ENCODE measurements at regions of chr11 and their contacts with region 1.

Region 1: DNA sequence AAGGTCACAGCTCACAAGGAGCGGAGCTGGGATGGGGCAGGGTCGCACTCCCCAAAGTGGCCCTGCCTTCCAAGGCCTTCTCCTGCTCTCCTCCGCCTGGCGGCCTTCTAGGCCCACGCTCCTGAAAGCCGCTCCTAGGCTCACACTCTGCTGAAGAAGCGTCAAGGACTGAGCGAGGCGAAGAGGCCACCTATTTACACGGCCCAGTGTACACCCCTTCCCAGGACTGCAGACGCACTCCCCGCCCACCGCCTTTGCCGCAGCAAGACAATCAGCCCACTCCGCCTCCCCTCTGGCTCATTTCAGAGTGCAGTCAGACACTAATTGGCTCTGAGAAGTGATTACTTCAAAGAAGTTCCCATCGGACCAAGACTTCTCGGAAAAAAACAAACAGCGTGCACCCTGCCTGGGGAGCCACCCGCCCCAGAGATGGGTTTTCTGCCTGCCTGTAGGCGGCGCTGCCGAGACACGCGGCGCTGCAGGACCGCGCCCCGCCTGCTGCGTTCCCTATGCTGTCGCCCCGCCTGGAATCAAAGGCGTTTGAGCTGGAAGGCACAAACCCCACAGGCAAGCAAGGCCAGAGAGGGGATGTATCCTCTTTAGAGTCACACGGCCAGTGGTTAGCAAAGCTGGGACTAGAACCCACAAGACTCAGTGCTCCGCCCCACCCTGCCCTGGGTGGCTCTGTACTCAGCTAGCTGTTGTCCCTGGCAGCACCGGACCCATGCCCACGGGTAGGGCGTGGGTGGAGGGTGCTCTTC is 414.8 kb downstream of the BUD13 start:
- DNase-seq: peak; percentile 43
- H3K4me3 ChIP-seq: no peak overlapping the region
- H3K27ac ChIP-seq: peak overlapping the region; percentile 39
- H3K4me1 ChIP-seq: peaks cover 25% of the 10 kb centered on the region
- H3K27me3 ChIP-seq: no peaks in the 10 kb centered on the region
- CTCF ChIP-seq: peak; percentile 87 to 91
- POLR2A ChIP-seq: no peak

Region 2: DNA sequence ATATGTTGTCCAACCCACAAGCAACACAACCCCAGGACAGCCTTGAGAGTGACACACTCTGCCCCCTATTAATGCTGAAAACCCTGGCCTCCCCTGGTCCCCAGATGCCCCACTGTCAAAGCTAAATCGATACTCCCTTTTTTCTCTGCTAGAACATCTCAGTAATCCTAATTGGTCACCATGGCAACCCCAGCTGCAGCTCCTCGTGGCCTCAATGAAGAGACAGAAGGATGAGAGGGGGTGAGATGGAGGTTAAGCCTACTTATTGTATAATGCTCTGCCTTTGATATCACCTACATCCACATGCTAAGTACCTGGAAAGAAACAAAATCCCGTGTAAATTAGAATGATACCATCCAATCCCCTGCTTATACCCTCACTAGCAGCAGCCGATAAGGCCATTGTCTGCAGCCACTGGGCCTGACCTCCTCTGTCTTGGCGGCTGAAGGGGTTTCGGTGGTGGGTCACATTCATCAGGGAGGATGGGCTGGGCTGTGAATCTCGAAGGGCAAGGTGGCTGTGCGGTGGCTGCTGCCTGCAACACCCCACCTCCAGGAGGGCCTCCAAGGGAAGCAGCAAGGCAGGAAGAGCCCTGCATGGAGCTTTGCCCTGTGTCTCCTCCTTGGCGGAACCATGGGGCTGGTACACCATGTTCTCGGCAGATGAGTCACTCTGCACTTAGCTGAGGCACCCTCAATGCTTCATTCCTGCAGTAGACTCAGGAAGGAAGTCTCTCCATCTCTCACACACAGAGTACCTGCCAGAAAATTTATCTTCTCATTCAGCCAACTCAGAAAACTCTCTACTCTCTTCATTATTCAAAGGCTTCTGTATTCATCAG is 15.4 kb after region 1 on chr11:
- CTCF ChIA-PET with region 1: interaction called, 11 read pairs
- POLR2A ChIA-PET with region 1: no interaction called
- dilution Hi-C with region 1: no loop called
- intact Hi-C with region 1: no loop called
- DNase-seq: peak; percentile 16
- H3K4me3 ChIP-seq: no peak overlapping the region
- H3K27ac ChIP-seq: peak overlapping the region; percentile 39
- H3K4me1 ChIP-seq: peaks cover 19% of the 10 kb centered on the region
- H3K27me3 ChIP-seq: no peaks in the 10 kb centered on the region
- CTCF ChIP-seq: no peak
- POLR2A ChIP-seq: no peak

Region 3: DNA sequence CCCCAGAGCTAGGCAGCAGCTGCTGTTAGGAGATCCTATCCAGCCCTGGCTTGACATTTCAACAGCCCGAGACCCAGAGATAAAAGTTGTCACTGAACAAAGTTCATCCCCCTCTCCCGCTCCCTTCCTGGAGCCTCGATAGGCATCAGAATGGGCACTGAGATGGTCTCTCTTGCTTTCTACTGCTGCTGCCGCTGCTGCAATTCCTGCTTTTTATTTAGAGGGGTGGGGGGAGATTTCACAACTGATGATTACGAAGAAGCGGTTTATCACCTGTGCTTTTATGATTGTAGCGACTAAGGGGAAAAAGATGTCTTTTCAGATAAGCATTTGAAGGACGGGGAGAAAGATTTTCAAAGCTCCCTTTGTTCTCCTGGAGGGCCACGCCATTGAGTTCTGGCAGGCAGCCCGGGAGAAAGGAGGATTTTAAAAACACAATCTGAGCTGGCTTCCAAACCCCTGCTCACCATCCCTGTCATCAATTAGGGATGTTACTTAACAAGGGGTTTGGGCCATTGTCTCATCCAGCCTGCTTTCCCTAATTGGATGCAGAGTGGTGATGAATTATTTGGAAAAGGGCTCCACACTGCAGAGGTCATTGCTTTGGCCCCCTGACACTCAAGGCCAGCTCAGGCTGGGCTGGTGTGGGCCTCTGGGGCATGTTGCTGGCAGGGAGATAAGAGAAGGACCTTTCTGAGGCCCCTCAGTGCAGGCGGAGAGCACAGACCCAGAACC is 70.1 kb after region 1 on chr11:
- CTCF ChIA-PET with region 1: interaction called, 66 read pairs
- POLR2A ChIA-PET with region 1: no interaction called
- dilution Hi-C with region 1: no loop called
- intact Hi-C with region 1: loop called (anchors 1 kb)
- DNase-seq: peak; percentile 7
- H3K4me3 ChIP-seq: no peak overlapping the region
- H3K27ac ChIP-seq: no peak overlapping the region
- H3K4me1 ChIP-seq: no peaks in the 10 kb centered on the region
- H3K27me3 ChIP-seq: no peaks in the 10 kb centered on the region
- CTCF ChIP-seq: no peak
- POLR2A ChIP-seq: no peak

Region 4: DNA sequence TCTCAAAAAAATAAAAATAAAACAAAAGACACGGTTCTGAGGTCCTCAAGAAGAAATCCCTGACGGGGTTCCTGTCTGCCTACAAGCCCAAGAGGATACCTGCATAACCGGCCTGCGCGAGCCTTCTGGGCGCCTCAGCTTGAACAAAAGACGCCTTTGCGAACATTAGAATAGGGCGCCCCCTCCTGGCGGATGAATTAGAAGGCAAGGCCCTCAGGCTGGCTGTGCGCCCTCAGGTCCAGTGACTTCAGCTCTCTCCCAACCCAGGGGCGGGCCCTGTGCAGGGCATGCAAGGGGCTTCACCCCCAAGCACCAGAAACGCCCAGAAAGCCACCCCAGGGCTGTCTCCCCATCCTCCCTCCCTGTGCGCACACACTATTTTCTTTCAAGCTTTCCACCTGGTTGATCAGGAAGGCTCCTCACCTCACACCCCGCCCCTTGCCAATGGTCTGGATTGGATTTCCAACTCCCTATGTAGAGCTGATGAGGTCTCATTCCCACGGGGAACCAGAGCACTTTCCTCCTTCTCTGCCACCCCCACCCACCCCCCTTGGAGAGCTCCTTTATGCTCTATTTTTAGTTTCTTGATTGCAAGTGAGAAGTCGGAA is 141.5 kb after region 1 on chr11:
- CTCF ChIA-PET with region 1: interaction called, 85 read pairs
- POLR2A ChIA-PET with region 1: no interaction called
- dilution Hi-C with region 1: no loop called
- intact Hi-C with region 1: loop called (anchors 1 kb)
- DNase-seq: peak; percentile 73
- H3K4me3 ChIP-seq: no peak overlapping the region
- H3K27ac ChIP-seq: no peak overlapping the region
- H3K4me1 ChIP-seq: no peaks in the 10 kb centered on the region
- H3K27me3 ChIP-seq: peaks cover 15 to 18% of the 10 kb centered on the region in 2 experiments
- CTCF ChIP-seq: peak; percentile 64 to 84
- POLR2A ChIP-seq: no peak

Region 5: GRCh38 chr11:116563028-116563711 is 205.2 kb after region 1 on chr11:
- CTCF ChIA-PET with region 1: interaction called, 3 read pairs
- POLR2A ChIA-PET with region 1: no interaction called
- dilution Hi-C with region 1: no loop called
- intact Hi-C with region 1: loop called (anchors 1 kb)
- DNase-seq: peak; percentile 9
- H3K4me3 ChIP-seq: no peak overlapping the region
- H3K27ac ChIP-seq: no peak overlapping the region
- H3K4me1 ChIP-seq: peaks cover 9% of the 10 kb centered on the region
- H3K27me3 ChIP-seq: no peaks in the 10 kb centered on the region
- CTCF ChIP-seq: no peak
- POLR2A ChIP-seq: no peak

Measured in endothelial cell of umbilical vein (primary cell).